Activated CD4-positive, alpha-beta T cell treated with anti-CD3 and anti-CD28 coated beads, Interleukin-2, amount 10 ng/mL, durations not matched to agents 24 days and 14 days (primary cell): ENCODE measurements at regions of chr6 and their contacts with region 1.

Region 1: DNA sequence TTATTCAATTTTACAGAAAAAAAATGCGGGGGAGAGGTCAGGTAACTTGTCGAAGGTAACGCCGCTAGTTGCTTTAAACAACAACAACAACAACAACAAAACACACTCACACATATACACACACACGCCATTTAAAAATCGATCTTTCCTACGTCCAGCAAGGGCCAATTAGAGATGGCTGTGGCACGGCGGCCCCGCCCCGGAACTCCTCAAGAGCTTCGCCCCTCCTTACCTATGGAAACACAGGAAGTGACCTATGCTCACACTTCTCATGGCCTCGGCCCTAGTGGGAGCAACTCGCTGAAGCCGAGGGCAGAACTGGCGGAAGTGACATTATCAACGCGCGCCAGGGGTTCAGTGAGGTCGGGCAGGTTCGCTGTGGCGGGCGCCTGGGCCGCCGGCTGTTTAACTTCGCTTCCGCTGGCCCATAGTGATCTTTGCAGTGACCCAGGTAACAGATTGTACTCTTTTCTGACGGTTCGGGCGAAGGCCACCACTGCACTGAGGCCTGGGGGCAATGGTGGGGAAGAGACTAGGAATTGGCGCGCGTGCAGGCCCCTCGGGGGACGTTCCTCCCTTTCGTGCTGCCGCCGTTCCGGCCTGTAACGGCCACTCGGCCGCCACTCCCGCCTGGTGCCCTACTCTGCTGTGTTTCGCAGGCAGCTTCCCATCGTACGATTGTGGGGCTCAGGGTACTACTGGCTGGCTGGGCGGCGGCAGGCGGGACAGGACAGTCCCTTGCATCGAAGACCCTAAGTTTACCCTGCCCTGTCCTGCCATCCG is at the start of gene TBP:
- DNase-seq: peak; percentile 99
- H3K4me3 Mint-ChIP-seq: no peak within 1 kb of the TSS
- H3K27ac Mint-ChIP-seq: no peak within 1 kb of the TSS
- H3K4me1 Mint-ChIP-seq: peaks cover 31% of the 10 kb centered on the region
- H3K27me3 Mint-ChIP-seq: no peaks in the 10 kb centered on the region
- total RNA-seq, gene TBP: 28.4 and 29.2 TPM in 2 replicates

Region 2: DNA sequence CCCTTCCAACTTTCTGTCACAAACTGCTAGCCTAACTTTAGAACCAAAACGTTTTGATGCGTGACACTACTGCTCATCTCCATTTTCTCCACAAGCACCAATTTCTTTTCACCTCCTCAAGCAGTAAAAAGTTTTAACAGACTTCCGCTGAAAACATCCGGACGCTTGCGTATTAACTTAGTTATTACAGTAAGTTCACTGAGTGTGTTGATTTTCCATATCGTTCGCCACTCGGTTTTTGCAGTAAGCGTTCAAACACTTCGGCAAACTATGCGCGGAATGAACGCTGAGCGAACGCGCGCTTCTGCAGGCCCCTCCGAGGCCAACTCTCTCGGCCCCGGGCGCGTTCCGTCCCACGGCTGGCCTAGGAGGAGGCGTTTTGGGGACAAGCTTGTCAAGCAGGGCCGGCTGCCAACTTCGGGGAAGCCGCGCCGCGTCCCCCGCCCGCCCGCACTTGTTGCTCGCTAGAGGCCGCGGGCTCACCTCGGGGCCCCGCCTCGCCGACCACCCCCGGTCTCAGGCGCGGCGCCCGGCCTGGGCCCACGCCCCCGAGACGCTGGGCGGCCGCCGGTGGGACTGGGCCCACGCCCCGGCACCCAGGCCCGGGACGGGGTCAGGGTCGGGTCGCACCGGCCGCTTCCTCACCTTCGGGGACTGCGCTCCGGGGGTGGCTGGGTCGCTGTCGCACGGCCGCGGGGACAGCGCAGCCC is 830.8 kb before region 1 on chr6:
- intact Hi-C with region 1: loop called (anchors 2 kb)
- DNase-seq: peak; percentile 89
- H3K4me3 Mint-ChIP-seq: peak overlapping the region; percentile 90
- H3K27ac Mint-ChIP-seq: peak overlapping the region; percentile 94
- H3K4me1 Mint-ChIP-seq: peaks cover 28% of the 10 kb centered on the region
- H3K27me3 Mint-ChIP-seq: peaks cover 5% of the 10 kb centered on the region

Region 3: DNA sequence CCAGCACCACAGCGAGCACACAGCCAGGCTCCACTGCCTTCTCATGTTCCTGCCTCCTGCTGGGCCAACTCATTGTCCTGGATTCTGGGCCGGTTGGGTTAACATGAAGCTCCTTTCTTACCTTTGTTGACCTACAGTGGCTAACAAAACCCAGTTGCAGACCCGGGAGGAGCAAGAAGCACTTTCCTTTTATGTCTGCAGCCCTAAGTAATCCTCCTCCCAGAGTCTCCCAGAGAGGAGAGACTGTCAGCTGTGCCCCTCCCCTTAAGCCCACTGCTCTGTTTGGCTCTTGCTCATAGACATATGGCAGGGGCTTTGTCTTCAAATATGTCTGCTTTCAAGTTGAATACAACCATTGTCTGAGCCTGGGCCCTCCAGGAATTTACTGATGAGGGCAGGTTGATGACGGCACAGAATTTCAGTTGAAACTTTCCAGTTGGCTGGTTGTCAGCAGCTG is 56.3 kb before region 1 on chr6:
- intact Hi-C with region 1: no loop called
- DNase-seq: no peak
- H3K4me3 Mint-ChIP-seq: no peak overlapping the region
- H3K27ac Mint-ChIP-seq: no peak overlapping the region
- H3K4me1 Mint-ChIP-seq: no peaks in the 10 kb centered on the region
- H3K27me3 Mint-ChIP-seq: peaks cover 28% of the 10 kb centered on the region

Region 4: DNA sequence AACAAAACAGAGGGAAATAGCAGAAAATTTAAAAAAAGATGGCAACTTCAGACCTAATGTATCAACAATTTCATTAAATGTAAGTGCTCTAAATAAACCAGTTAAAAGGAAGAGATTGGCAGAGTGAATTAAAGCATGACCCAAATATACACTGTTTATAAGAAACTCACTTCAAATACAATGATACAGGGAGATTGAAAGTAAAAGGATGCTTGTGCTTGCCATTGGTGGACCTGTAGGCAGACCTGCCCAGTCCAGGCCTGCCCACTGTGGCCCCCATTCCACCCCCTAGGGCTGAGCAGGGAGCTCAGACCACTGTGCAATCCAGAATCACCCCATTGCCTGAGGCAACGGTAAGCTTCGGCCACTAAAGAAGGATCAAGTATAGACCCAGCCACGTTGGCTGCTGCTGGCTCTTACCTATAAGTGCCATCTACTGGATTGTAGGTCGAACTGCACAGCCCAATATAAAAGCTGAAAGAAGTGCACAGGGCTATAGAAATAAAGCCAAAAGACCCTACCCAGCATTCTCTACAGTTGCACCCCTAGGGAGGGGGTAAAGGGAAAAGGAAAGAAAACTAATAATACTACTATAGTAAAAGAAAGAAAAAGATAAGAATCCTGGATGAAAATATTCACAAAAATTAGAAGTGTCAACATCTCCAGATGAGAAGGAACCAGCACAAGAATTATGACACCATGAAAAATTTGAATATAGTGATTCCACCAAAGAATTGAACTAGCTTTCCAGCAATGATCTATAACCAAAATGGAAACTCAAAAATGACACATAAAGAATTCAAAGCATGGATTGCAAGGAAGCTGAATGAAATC is 37.2 kb before region 1 on chr6:
- intact Hi-C with region 1: no loop called
- DNase-seq: peak; percentile 81
- H3K4me3 Mint-ChIP-seq: peak overlapping the region; percentile 38
- H3K27ac Mint-ChIP-seq: no peak overlapping the region
- H3K4me1 Mint-ChIP-seq: peaks cover 3% of the 10 kb centered on the region
- H3K27me3 Mint-ChIP-seq: peaks cover 66% of the 10 kb centered on the region

Region 5: DNA sequence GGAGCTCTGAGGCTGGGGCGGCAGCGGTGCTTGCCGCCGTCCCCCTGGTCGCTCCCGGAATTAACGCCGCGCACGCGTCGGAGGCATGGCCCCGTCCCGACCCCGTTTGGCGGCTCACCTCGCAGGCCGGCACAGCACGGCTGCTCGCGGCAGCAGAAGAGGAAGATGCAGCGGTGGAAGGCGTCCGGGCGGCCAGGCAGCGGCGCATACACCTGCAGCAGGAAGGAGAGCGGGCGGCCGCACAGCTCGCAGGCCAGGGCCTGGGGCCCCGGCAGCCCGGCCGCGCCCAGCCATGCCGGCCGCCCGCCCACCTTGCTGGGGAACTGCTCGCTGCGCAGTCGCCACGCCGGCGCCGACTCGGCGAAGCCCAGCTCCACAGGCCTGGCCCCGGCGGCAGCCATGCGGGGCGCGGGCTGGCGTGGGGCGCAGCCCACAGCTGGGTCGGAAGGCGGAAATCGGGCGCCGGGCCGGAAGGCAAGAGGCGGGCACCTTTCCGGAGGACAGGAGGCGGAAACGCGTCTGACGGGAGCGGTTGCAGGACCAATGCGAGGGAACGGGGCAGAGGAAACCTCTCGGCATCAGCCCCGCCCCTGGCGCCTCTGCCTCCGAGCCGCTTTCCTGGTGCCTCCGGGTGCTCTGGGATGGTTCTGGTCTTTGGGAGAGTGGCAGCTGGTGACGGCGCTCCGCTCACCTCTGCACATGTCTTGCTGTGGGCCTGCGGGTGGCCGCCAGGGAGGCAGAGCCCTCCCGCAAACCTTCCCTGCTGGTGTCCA is 30.2 kb after region 1 on chr6 and contains the start of gene PDCD2:
- intact Hi-C with region 1: loop called (anchors 1 kb)
- DNase-seq: peak; percentile 98
- H3K4me3 Mint-ChIP-seq: peak within 1 kb of the TSS; percentile 100
- H3K27ac Mint-ChIP-seq: peak within 1 kb of the TSS; percentile 97
- H3K4me1 Mint-ChIP-seq: peaks cover 24% of the 10 kb centered on the region
- H3K27me3 Mint-ChIP-seq: peaks cover 3% of the 10 kb centered on the region
- total RNA-seq, gene PDCD2: 138 and 139 TPM in 2 replicates